ENCODE measurements at regions of chr9 and their contacts with region 1.

Region 1: DNA sequence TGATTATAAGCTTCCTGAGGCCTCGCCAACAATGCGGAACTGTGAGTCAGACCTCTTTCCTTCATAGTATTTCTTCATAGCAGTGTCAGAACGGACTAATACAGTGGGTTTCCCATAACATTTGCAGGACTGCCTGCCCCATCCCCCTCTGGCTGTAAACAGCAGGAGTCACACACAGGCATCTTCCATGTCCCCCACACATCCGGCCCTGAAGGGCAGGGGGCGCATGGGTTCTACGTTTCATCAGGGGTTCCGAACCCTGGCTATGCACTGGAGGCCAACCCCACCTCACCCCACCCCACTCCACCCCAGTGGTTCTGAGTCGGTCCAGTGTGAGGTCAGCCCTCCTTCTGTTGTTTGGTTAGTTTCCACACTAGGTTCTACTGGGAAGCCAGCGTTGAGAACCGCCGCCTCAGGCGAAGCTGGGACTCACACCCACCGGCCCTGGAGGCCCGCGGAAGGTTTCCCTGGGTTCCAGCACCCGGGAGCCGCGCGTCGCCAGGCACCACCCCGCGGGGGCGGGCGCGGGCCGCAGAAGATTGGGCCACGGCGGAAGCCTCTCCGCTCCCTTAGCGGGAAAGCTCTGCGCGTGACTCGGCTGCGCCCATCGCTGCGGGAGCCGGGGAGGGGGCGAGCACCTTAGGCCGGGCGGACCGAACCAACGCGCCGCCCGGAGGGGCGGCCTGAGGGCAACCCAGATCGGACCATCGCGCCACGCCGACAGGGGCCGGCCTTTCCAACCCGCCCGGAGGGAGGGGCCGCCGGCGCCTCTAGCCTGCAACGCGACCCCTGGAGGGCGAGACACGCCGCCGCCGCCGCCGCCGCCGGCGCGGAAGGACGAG is at the start of gene RUSC2:
- DNase-seq: peak; percentile 73
- ATAC-seq: peak; percentile 67
- H3K4me3 ChIP-seq: peak within 1 kb of the TSS; percentile 70
- H3K27ac ChIP-seq: peak within 1 kb of the TSS; percentile 74
- H3K4me1 ChIP-seq: peaks cover 31% of the 10 kb centered on the region
- H3K27me3 ChIP-seq: no peaks in the 10 kb centered on the region
- CTCF ChIP-seq: 0 out of 2 replicates have a peak, but pooled peaks have one; percentile 22
- total RNA-seq, gene RUSC2: 10.7 and 13.3 TPM in 2 replicates

Region 2: GRCh38 chr9:35287986-35288632 is 201.4 kb before region 1 on chr9:
- CTCF ChIA-PET with region 1: no interaction called
- POLR2A ChIA-PET with region 1: no interaction called
- intact Hi-C with region 1: no loop called
- DNase-seq: no peak
- ATAC-seq: no peak
- H3K4me3 ChIP-seq: no peak overlapping the region
- H3K27ac ChIP-seq: no peak overlapping the region
- H3K4me1 ChIP-seq: no peaks in the 10 kb centered on the region
- H3K27me3 ChIP-seq: no peaks in the 10 kb centered on the region
- CTCF ChIP-seq: no peak

Region 3: DNA sequence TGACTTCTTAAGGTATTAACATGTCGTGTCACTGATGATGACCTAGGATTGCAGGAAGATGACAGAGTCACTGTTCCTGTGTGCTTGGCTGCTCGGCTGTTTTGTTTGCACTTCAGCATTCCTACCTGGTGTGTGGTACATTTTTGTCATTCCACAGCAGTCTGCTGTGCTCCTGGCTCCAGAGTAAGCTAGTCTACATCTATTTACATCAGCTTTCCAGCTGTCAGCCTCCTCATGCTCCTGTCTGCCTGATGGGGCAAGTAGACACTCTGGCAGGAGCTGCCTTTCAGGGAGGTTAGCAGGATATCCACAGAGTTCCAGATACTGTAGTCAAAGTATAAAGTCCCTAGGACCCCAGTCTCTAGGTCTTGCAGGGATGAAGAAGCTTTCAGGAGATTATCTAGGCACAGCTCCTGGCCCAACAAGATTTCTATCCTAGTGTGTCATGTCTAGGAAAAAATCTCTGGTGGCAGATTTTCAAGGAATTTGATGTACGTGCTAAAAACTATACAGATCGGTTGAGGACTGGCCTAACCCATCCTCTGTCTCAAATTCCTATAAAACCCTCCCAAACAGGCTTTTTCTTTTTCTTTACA is 28.8 kb after region 1 on chr9:
- CTCF ChIA-PET with region 1: no interaction called
- POLR2A ChIA-PET with region 1: no interaction called
- intact Hi-C with region 1: loop called (anchors 1 kb)
- DNase-seq: peak; percentile 95
- ATAC-seq: peak; percentile 91
- H3K4me3 ChIP-seq: peak overlapping the region; percentile 10; the same call in 1 of the 2 replicates
- H3K27ac ChIP-seq: peak overlapping the region; percentile 53
- H3K4me1 ChIP-seq: peaks cover 68% of the 10 kb centered on the region
- H3K27me3 ChIP-seq: no peaks in the 10 kb centered on the region
- CTCF ChIP-seq: no peak

Measured in PC-3 (cell line).